CD4-positive, alpha-beta T cell (primary cell): ENCODE measurements at regions of chr1 and their contacts with region 1.

Region 1: GRCh38 chr1:43358746-43359693 is at the start of gene CDC20:
- DNase-seq: peak; percentile 91 to 98 (median 96)
- ATAC-seq: peak; percentile 99
- H3K4me3 ChIP-seq: peak within 1 kb of the TSS; percentile 76
- H3K4me3 Mint-ChIP-seq: peak within 1 kb of the TSS; percentile 85
- H3K27ac ChIP-seq: peak within 1 kb of the TSS in 1 of 2 donors; percentile 37
- H3K27ac Mint-ChIP-seq: peak within 1 kb of the TSS; percentile 87
- H3K4me1 ChIP-seq: peaks cover 15% of the 10 kb centered on the region
- H3K4me1 Mint-ChIP-seq: peaks cover 19% of the 10 kb centered on the region
- H3K27me3 ChIP-seq: no peaks in the 10 kb centered on the region
- H3K27me3 Mint-ChIP-seq: no peaks in the 10 kb centered on the region
- CTCF ChIP-seq: no peak
- total RNA-seq, gene CDC20: 1.1 to 1.8 TPM

Region 2: GRCh38 chr1:42924082-42924850 is 434.8 kb before region 1 on chr1:
- CTCF ChIA-PET with region 1: no interaction called
- POLR2A ChIA-PET with region 1: no interaction called
- intact Hi-C with region 1: loop called in 1 of 2 experiments (anchors 5 kb)
- DNase-seq: peak; percentile 81 to 94 (median 88)
- ATAC-seq: peak; percentile 89
- H3K4me3 ChIP-seq: peak overlapping the region; percentile 81
- H3K4me3 Mint-ChIP-seq: peak overlapping the region; percentile 94
- H3K27ac ChIP-seq: peak overlapping the region; percentile 66 to 86
- H3K27ac Mint-ChIP-seq: peak overlapping the region; percentile 84
- H3K4me1 ChIP-seq: peaks cover 22% of the 10 kb centered on the region
- H3K4me1 Mint-ChIP-seq: peaks cover 40% of the 10 kb centered on the region
- H3K27me3 ChIP-seq: no peaks in the 10 kb centered on the region
- H3K27me3 Mint-ChIP-seq: no peaks in the 10 kb centered on the region
- CTCF ChIP-seq: no peak

Region 3: GRCh38 chr1:43238085-43238484 is 120.9 kb before region 1 on chr1:
- CTCF ChIA-PET with region 1: no interaction called
- POLR2A ChIA-PET with region 1: no interaction called
- intact Hi-C with region 1: loop called in 1 of 2 experiments (anchors 1 kb)
- DNase-seq: peak in 7 of 14 experiments; percentile 7 to 44 (median 24)
- ATAC-seq: peak; percentile 43
- H3K4me3 ChIP-seq: no peak overlapping the region
- H3K4me3 Mint-ChIP-seq: no peak overlapping the region
- H3K27ac ChIP-seq: no peak overlapping the region
- H3K27ac Mint-ChIP-seq: no peak overlapping the region
- H3K4me1 ChIP-seq: no peaks in the 10 kb centered on the region
- H3K4me1 Mint-ChIP-seq: no peaks in the 10 kb centered on the region
- H3K27me3 ChIP-seq: no peaks in the 10 kb centered on the region
- H3K27me3 Mint-ChIP-seq: no peaks in the 10 kb centered on the region
- CTCF ChIP-seq: peak; percentile 43

Region 4: GRCh38 chr1:43285269-43285990 is 73.6 kb before region 1 on chr1 and contains the start of gene C1orf210:
- CTCF ChIA-PET with region 1: no interaction called
- POLR2A ChIA-PET with region 1: no interaction called
- intact Hi-C with region 1: no loop called
- DNase-seq: peak in 1 of 14 experiments; percentile 22
- ATAC-seq: no peak
- H3K4me3 ChIP-seq: no peak within 1 kb of the TSS
- H3K4me3 Mint-ChIP-seq: no peak within 1 kb of the TSS
- H3K27ac ChIP-seq: no peak within 1 kb of the TSS
- H3K27ac Mint-ChIP-seq: no peak within 1 kb of the TSS
- H3K4me1 ChIP-seq: no peaks in the 10 kb centered on the region
- H3K4me1 Mint-ChIP-seq: no peaks in the 10 kb centered on the region
- H3K27me3 ChIP-seq: no peaks in the 10 kb centered on the region
- H3K27me3 Mint-ChIP-seq: peaks cover 4% of the 10 kb centered on the region
- CTCF ChIP-seq: no peak
- total RNA-seq, gene C1orf210: not detected

Region 5: DNA sequence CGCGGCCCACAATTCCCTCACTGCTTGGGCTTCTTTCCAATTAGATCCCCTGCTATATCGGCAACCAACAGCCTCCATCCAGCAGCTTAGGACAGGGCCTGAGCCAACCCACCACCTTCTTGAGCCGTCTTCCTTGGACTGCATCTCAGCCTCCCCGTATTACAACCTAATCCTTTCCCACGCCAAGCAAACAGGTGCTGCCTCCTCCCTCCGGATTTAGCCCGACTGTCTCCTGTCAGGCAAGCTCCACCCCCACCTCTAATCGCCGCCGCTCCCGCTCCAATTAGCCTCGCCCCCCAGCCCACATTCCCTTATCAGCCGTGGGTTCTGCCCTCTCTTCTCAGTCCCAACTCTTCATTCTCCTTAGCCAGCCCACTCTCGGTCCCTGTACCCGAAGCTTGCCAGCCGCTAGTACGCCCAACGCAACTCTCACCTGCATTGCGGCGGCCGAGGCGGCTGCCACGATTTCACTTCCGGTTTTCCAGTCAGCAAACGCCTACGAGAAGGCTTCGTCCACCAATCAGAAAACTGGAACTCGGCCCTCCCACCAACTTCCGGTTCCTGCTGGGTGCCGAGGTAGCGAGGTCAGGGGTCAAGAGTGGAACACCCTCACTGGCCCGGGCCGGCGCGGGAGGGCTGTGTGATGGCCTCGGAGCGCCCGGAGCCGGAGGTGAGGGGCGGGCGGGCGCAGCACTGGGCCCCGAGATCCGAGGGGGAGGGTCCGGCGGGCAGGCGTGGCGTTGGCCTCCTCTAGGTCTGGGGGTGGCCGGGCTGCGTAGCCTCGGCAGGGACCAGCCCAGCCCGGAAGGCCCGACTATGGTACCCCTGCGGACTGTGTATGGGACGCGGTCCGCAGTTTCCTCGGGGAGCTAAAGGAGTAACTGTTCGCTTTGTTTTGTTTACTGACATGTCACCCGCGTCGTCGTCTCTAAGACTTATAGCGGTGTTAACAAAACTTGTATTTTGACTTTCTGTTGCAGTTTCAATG is 30.6 kb after region 1 on chr1 and contains the starts of genes MED8 and SZT2:
- CTCF ChIA-PET with region 1: interaction called, 4 read pairs
- POLR2A ChIA-PET with region 1: interaction called, 10 read pairs
- intact Hi-C with region 1: loop called in 1 of 2 experiments (anchors 2 kb)
- DNase-seq: peak; percentile 86 to 95 (median 92)
- ATAC-seq: peak; percentile 89
- H3K4me3 ChIP-seq: peak within 1 kb of the TSS; percentile 86
- H3K4me3 Mint-ChIP-seq: peak within 1 kb of the TSS; percentile 100
- H3K27ac ChIP-seq: peak within 1 kb of the TSS; percentile 55
- H3K27ac Mint-ChIP-seq: peak within 1 kb of the TSS; percentile 86
- H3K4me1 ChIP-seq: peaks cover 27% of the 10 kb centered on the region
- H3K4me1 Mint-ChIP-seq: peaks cover 44% of the 10 kb centered on the region
- H3K27me3 ChIP-seq: no peaks in the 10 kb centered on the region
- H3K27me3 Mint-ChIP-seq: no peaks in the 10 kb centered on the region
- CTCF ChIP-seq: no peak
- total RNA-seq, gene MED8: 14.8 to 17.6 TPM
- total RNA-seq, gene SZT2: 69.7 to 72.5 TPM

Region 6: GRCh38 chr1:43974443-43975248 is 615.6 kb after region 1 on chr1 and contains the start of gene ATP6V0B:
- CTCF ChIA-PET with region 1: no interaction called
- POLR2A ChIA-PET with region 1: no interaction called
- intact Hi-C with region 1: loop called in 1 of 2 experiments (anchors 10 kb)
- DNase-seq: peak; percentile 85 to 96 (median 91)
- ATAC-seq: peak; percentile 72
- H3K4me3 ChIP-seq: peak within 1 kb of the TSS; percentile 99
- H3K4me3 Mint-ChIP-seq: peak within 1 kb of the TSS; percentile 96
- H3K27ac ChIP-seq: peak within 1 kb of the TSS; percentile 78 to 86
- H3K27ac Mint-ChIP-seq: peak within 1 kb of the TSS; percentile 92
- H3K4me1 ChIP-seq: peaks cover 61% of the 10 kb centered on the region
- H3K4me1 Mint-ChIP-seq: peaks cover 68% of the 10 kb centered on the region
- H3K27me3 ChIP-seq: peaks cover under 1% of the 10 kb centered on the region in 2 experiments
- H3K27me3 Mint-ChIP-seq: peaks cover under 1% of the 10 kb centered on the region
- CTCF ChIP-seq: no peak
- total RNA-seq, gene ATP6V0B: 42.9 to 47.0 TPM

Region 7: DNA sequence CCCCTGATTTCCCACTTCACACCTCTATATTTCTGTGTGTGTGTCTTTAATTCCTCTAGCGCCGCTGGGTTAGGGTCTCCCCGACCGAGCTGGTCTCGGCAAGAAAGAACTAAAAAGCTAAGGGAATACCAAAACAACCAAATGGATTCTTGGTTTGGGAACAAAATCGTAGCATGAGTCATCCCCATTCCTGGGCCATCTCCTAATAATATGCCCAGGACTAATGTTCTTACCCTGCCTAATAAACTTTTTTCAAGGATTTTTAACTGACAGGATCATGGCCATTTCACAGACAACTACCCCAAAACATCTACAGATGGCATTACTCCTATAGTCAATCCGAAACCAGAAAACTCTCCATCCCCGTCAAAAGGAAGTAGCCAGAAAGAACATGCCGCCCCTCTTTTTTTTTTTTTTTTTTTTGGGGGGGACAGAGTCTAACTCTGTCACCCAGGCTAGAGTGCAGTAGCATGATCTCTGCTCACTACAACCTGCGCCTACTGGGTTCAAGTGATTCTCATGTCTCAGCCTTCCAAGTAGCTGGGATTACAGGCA is 1963.5 kb after region 1 on chr1:
- CTCF ChIA-PET with region 1: no interaction called
- POLR2A ChIA-PET with region 1: no interaction called
- intact Hi-C with region 1: no loop called
- DNase-seq: no peak
- ATAC-seq: no peak
- H3K4me3 ChIP-seq: no peak overlapping the region
- H3K4me3 Mint-ChIP-seq: no peak overlapping the region
- H3K27ac ChIP-seq: no peak overlapping the region
- H3K27ac Mint-ChIP-seq: no peak overlapping the region
- H3K4me1 ChIP-seq: peaks cover 15% of the 10 kb centered on the region
- H3K4me1 Mint-ChIP-seq: no peaks in the 10 kb centered on the region
- H3K27me3 ChIP-seq: peaks cover 0 to 2% of the 10 kb centered on the region in 2 experiments
- H3K27me3 Mint-ChIP-seq: no peaks in the 10 kb centered on the region
- CTCF ChIP-seq: no peak